H1 (cell line): ENCODE measurements at regions of chr3 and their contacts with region 1.

Region 1: GRCh38 chr3:170078620-170079281 is 41.0 kb downstream of the GPR160 start:
- DNase-seq: no peak
- H3K4me3 ChIP-seq: no peak overlapping the region
- H3K27ac ChIP-seq: no peak overlapping the region
- H3K4me1 ChIP-seq: peaks cover 0 to 2% (median 0%) of the 10 kb centered on the region in 4 experiments; a peak in 1 of 7 replicates
- H3K27me3 ChIP-seq: no peaks in the 10 kb centered on the region
- CTCF ChIP-seq: peak; percentile 16 to 35 (median 32); a peak in 3 of 4 replicates
- EP300 ChIP-seq: no peak
- POLR2A ChIP-seq: no peak
- RAD21 ChIP-seq: peak; percentile 30 to 42

Region 2: DNA sequence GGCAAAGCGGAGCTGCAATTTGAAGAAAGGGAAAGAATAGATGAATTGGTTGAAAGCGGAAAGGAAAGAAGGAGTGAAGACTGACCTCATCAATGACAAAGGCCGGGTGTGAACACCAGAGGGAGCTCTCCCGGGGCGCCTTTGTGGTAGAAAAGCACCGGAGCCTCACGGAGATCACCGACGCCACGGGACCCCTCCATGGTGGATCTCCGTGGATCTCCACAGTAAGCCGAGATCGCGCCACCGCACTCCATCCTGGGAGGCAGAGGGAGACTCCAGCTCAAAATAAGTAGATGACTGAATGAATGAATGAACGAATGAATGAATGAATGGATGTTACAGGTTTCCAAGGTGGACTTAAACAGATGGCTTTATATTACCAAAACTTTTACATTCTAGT is 16.0 kb before region 1 on chr3:
- CTCF ChIA-PET with region 1: interaction called, 28 read pairs
- POLR2A ChIA-PET with region 1: interaction called, 4 read pairs
- DNase-seq: peak in 1 of 2 experiments; percentile 80
- H3K4me3 ChIP-seq: no peak overlapping the region
- H3K27ac ChIP-seq: no peak overlapping the region
- H3K4me1 ChIP-seq: peaks cover 4 to 15% (median 9%) of the 10 kb centered on the region in 4 experiments
- H3K27me3 ChIP-seq: no peaks in the 10 kb centered on the region
- CTCF ChIP-seq: peak; percentile 44 to 68 (median 50)
- EP300 ChIP-seq: no peak
- POLR2A ChIP-seq: no peak
- RAD21 ChIP-seq: peak; percentile 32 to 44; a peak in 3 of 4 replicates

Region 3: DNA sequence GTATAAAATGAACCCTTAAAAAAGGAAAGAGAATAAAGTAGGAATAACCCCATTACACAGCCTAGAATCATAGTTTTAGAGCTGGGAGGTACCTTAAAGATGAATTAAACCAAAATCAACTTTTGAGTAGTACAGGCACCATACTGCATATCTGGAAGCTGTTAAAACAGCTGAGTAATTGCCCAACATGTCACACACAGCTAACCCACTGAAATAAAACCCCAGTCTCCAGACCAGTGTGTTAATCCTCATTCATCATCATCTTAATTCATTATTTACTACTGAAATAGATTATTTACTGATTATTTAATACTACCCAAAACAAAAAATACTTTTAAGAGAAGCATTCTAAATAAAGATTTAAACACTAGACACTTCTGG is 11.8 kb after region 1 on chr3:
- CTCF ChIA-PET with region 1: interaction called, 34 read pairs
- POLR2A ChIA-PET with region 1: interaction called, 3 read pairs
- DNase-seq: no peak
- H3K4me3 ChIP-seq: no peak overlapping the region
- H3K27ac ChIP-seq: no peak overlapping the region
- H3K4me1 ChIP-seq: no peaks in the 10 kb centered on the region
- H3K27me3 ChIP-seq: no peaks in the 10 kb centered on the region
- CTCF ChIP-seq: no peak
- EP300 ChIP-seq: no peak
- POLR2A ChIP-seq: no peak
- RAD21 ChIP-seq: no peak

Region 4: DNA sequence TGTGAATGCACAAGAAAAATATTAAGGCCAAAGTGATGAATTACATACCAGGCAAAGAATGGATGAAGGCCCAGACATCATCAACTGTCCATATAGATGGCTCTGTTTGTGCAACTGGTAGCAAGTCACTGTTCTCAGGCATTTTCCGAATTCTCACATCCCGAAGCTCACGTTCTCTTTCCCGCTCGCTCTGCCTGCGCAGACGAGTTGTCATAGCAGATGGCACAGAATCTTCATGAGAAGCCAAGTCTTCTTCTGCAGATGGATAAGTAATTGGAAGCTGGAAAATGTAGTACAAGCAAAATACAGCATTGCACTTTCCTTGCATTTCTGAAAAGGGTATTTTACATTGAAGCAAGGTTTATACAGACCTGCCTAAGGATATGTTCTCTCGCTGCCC is 23.7 kb after region 1 on chr3:
- CTCF ChIA-PET with region 1: interaction called, 12 read pairs
- POLR2A ChIA-PET with region 1: no interaction called
- DNase-seq: no peak
- H3K4me3 ChIP-seq: no peak overlapping the region
- H3K27ac ChIP-seq: no peak overlapping the region
- H3K4me1 ChIP-seq: no peaks in the 10 kb centered on the region
- H3K27me3 ChIP-seq: no peaks in the 10 kb centered on the region
- CTCF ChIP-seq: no peak
- EP300 ChIP-seq: no peak
- POLR2A ChIP-seq: no peak
- RAD21 ChIP-seq: no peak

Region 5: GRCh38 chr3:170128977-170129431 is 50.3 kb after region 1 on chr3:
- CTCF ChIA-PET with region 1: interaction called, 10 read pairs
- POLR2A ChIA-PET with region 1: no interaction called
- DNase-seq: no peak
- H3K4me3 ChIP-seq: no peak overlapping the region
- H3K27ac ChIP-seq: no peak overlapping the region
- H3K4me1 ChIP-seq: no peaks in the 10 kb centered on the region
- H3K27me3 ChIP-seq: no peaks in the 10 kb centered on the region
- CTCF ChIP-seq: no peak
- EP300 ChIP-seq: no peak
- POLR2A ChIP-seq: no peak
- RAD21 ChIP-seq: no peak